ENCODE measurements at regions of chr20 and their contacts with region 1.

Region 1: GRCh38 chr20:57596998-57597939 is 23.0 kb downstream of the ZBP1 start:
- DNase-seq: peak; percentile 59 to 86 (median 76)
- ATAC-seq: peak; percentile 89
- H3K4me3 ChIP-seq: no peak overlapping the region
- H3K4me3 Mint-ChIP-seq: peak overlapping the region in 4 of 10 donors; percentile 13 to 49 (median 20)
- H3K27ac ChIP-seq: no peak overlapping the region
- H3K27ac Mint-ChIP-seq: peak overlapping the region in 1 of 9 donors; percentile 78
- H3K4me1 ChIP-seq: peaks cover 3 to 4% of the 10 kb centered on the region in 2 donors
- H3K4me1 Mint-ChIP-seq: peaks cover 0 to 13% (median 4%) of the 10 kb centered on the region in 7 donors
- H3K27me3 ChIP-seq: no peaks in the 10 kb centered on the region
- H3K27me3 Mint-ChIP-seq: peaks cover 0 to 37% (median 0%) of the 10 kb centered on the region in 5 donors

Region 2: GRCh38 chr20:57351042-57351783 is 246.1 kb before region 1 on chr20 and contains the start of gene RAE1:
- CTCF ChIA-PET with region 1: interaction called, 4 read pairs
- POLR2A ChIA-PET with region 1: no interaction called
- intact Hi-C with region 1: loop called in 1 of 2 experiments (anchors 2 kb)
- DNase-seq: peak; percentile 81 to 92 (median 89)
- ATAC-seq: peak; percentile 88
- H3K4me3 ChIP-seq: peak within 1 kb of the TSS; percentile 81
- H3K4me3 Mint-ChIP-seq: peak within 1 kb of the TSS; percentile 89 to 97 (median 92)
- H3K27ac ChIP-seq: peak within 1 kb of the TSS; percentile 90
- H3K27ac Mint-ChIP-seq: peak within 1 kb of the TSS; percentile 81 to 93 (median 90)
- H3K4me1 ChIP-seq: peaks cover 0 to 19% of the 10 kb centered on the region in 2 donors
- H3K4me1 Mint-ChIP-seq: peaks cover 14 to 46% (median 29%) of the 10 kb centered on the region in 7 donors
- H3K27me3 ChIP-seq: no peaks in the 10 kb centered on the region
- H3K27me3 Mint-ChIP-seq: peaks cover 0 to 14% (median 0%) of the 10 kb centered on the region in 5 donors
- total RNA-seq, gene RAE1: 31.0 to 41.3 (median 35.2) TPM

Region 3: GRCh38 chr20:57514273-57514751 is 83.0 kb before region 1 on chr20:
- CTCF ChIA-PET with region 1: no interaction called
- POLR2A ChIA-PET with region 1: no interaction called
- intact Hi-C with region 1: loop called in 1 of 2 experiments (anchors 1 kb)
- DNase-seq: peak in 6 of 9 donors; percentile 13 to 31 (median 23)
- ATAC-seq: peak; percentile 45
- H3K4me3 ChIP-seq: no peak overlapping the region
- H3K4me3 Mint-ChIP-seq: no peak overlapping the region
- H3K27ac ChIP-seq: no peak overlapping the region
- H3K27ac Mint-ChIP-seq: peak overlapping the region in 1 of 9 donors; percentile 27
- H3K4me1 ChIP-seq: no peaks in the 10 kb centered on the region
- H3K4me1 Mint-ChIP-seq: no peaks in the 10 kb centered on the region
- H3K27me3 ChIP-seq: peaks cover 0 to 3% of the 10 kb centered on the region in 2 donors
- H3K27me3 Mint-ChIP-seq: peaks cover 0 to 14% (median 5%) of the 10 kb centered on the region in 5 donors

Region 4: DNA sequence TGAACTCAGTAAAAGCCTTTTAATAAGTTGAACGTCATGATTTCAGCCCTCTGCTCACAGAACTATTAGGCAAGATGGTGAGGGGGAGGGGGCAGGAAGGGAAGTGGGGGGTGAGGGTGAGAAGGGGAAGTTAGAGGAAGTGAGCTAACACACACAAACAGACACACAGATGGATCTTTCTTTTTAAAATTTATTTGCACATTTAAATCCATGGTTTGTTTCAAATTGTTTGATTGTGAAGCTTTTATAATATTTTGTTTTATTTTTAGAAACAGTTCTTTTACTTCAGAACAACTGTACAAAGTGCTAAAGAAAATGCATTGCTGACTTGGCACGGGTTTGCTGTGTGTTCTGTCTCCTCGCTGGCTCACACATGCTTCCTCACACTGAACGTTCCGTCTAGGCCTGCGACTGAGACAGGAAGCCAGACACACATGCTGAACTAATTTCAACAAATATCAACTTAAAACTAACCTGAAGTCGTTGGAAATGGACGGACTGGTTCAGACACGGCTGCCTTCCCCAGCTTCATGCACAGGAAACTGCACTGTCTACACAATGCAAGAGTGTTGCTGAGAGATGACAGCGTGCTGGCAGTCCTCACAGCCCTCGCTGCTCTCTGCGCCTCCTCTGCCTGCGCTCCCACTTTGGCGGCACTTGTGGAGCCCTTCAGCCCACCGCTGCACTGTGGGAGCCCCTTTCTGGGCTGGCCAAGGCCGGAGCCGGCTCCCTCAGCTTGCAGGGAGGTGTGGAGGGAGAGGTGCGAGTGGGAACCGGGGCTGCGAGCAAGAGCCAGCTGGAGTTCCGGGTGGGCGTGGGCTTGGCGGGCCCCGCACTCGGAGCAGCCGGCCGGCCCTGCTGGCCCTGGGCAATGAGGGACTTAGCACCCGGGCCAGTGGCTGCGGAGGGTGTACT is 31.0 kb after region 1 on chr20:
- CTCF ChIA-PET with region 1: interaction called, 10 read pairs
- POLR2A ChIA-PET with region 1: interaction called, 18 read pairs
- intact Hi-C with region 1: loop called in 1 of 2 experiments (anchors 2 kb)
- DNase-seq: peak in 7 of 9 donors; percentile 62 to 81 (median 71)
- ATAC-seq: peak; percentile 88
- H3K4me3 ChIP-seq: peak overlapping the region; percentile 49
- H3K4me3 Mint-ChIP-seq: peak overlapping the region; percentile 85 to 97 (median 91)
- H3K27ac ChIP-seq: peak overlapping the region; percentile 83
- H3K27ac Mint-ChIP-seq: peak overlapping the region; percentile 92 to 100 (median 98)
- H3K4me1 ChIP-seq: peaks cover 41 to 51% of the 10 kb centered on the region in 2 donors
- H3K4me1 Mint-ChIP-seq: peaks cover 38 to 94% (median 80%) of the 10 kb centered on the region in 7 donors
- H3K27me3 ChIP-seq: no peaks in the 10 kb centered on the region
- H3K27me3 Mint-ChIP-seq: peaks cover 0 to 53% (median 0%) of the 10 kb centered on the region in 5 donors

Region 5: DNA sequence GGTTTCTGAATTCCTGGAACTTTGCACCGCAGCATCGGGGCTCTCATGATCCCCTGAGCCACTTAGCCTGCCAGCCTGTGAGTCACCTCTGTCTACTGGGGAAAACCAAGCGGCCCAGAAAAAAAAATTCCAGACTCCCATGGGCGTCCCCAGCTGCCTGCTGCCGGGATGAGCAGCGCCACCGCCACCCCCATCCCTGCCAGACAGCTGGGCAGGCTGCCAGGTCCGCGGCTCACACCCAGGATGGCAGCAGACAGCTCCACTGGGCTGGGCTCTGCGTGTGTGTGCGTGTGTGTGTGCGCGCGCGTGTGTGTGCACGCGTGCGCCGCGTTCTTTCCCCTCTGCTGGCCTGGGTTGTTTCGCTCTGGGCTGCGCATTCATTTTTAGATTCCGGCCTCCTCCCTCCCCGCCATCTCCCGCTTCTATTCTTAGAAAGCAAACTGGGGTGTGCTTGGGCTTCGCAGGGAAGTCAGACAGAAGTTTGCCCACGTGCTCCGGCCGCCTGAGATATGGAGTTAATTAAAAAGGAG is 151.4 kb after region 1 on chr20:
- CTCF ChIA-PET with region 1: no interaction called
- POLR2A ChIA-PET with region 1: no interaction called
- intact Hi-C with region 1: no loop called
- DNase-seq: peak; percentile 9 to 63 (median 37)
- ATAC-seq: peak; percentile 80
- H3K4me3 ChIP-seq: peak overlapping the region; percentile 48
- H3K4me3 Mint-ChIP-seq: peak overlapping the region; percentile 76 to 92 (median 84)
- H3K27ac ChIP-seq: no peak overlapping the region
- H3K27ac Mint-ChIP-seq: peak overlapping the region in 3 of 9 donors; percentile 60 to 73 (median 67)
- H3K4me1 ChIP-seq: no peaks in the 10 kb centered on the region
- H3K4me1 Mint-ChIP-seq: peaks cover 5 to 21% (median 11%) of the 10 kb centered on the region in 7 donors
- H3K27me3 ChIP-seq: no peaks in the 10 kb centered on the region
- H3K27me3 Mint-ChIP-seq: peaks cover 14 to 39% (median 22%) of the 10 kb centered on the region in 5 donors

Region 6: GRCh38 chr20:58087193-58087858 is 490.1 kb after region 1 on chr20:
- CTCF ChIA-PET with region 1: no interaction called
- POLR2A ChIA-PET with region 1: no interaction called
- intact Hi-C with region 1: loop called (anchors 1 to 2 kb)
- DNase-seq: peak in 1 of 9 donors; percentile 13
- ATAC-seq: no peak
- H3K4me3 ChIP-seq: no peak overlapping the region
- H3K4me3 Mint-ChIP-seq: no peak overlapping the region
- H3K27ac ChIP-seq: no peak overlapping the region
- H3K27ac Mint-ChIP-seq: no peak overlapping the region
- H3K4me1 ChIP-seq: no peaks in the 10 kb centered on the region
- H3K4me1 Mint-ChIP-seq: peaks cover 0 to 1% (median 0%) of the 10 kb centered on the region in 7 donors
- H3K27me3 ChIP-seq: no peaks in the 10 kb centered on the region
- H3K27me3 Mint-ChIP-seq: peaks cover 0 to 15% (median 5%) of the 10 kb centered on the region in 5 donors